HEK293 (cell line): ENCODE measurements at regions of chr12 and their contacts with region 1.

Region 1: GRCh38 chr12:52980693-52981423 is 25.4 kb upstream of the EIF4B start:
- H3K4me3 ChIP-seq: no peak overlapping the region
- H3K27ac ChIP-seq: no peak overlapping the region
- H3K4me1 ChIP-seq: no peaks in the 10 kb centered on the region
- CTCF ChIP-seq: peak; percentile 99

Region 2: GRCh38 chr12:52139552-52140062 is 841.3 kb before region 1 on chr12:
- CTCF ChIA-PET with region 1: interaction called, 13 read pairs
- POLR2A ChIA-PET with region 1: no interaction called
- H3K4me3 ChIP-seq: no peak overlapping the region
- H3K27ac ChIP-seq: no peak overlapping the region
- H3K4me1 ChIP-seq: no peaks in the 10 kb centered on the region; the same call in 1 of the 2 replicates
- CTCF ChIP-seq: peak; percentile 59

Region 3: GRCh38 chr12:52372216-52373154 is 608.4 kb before region 1 on chr12:
- CTCF ChIA-PET with region 1: interaction called, 22 read pairs
- POLR2A ChIA-PET with region 1: no interaction called
- H3K4me3 ChIP-seq: no peak overlapping the region
- H3K27ac ChIP-seq: no peak overlapping the region
- H3K4me1 ChIP-seq: no peaks in the 10 kb centered on the region
- CTCF ChIP-seq: peak; percentile 77

Region 4: DNA sequence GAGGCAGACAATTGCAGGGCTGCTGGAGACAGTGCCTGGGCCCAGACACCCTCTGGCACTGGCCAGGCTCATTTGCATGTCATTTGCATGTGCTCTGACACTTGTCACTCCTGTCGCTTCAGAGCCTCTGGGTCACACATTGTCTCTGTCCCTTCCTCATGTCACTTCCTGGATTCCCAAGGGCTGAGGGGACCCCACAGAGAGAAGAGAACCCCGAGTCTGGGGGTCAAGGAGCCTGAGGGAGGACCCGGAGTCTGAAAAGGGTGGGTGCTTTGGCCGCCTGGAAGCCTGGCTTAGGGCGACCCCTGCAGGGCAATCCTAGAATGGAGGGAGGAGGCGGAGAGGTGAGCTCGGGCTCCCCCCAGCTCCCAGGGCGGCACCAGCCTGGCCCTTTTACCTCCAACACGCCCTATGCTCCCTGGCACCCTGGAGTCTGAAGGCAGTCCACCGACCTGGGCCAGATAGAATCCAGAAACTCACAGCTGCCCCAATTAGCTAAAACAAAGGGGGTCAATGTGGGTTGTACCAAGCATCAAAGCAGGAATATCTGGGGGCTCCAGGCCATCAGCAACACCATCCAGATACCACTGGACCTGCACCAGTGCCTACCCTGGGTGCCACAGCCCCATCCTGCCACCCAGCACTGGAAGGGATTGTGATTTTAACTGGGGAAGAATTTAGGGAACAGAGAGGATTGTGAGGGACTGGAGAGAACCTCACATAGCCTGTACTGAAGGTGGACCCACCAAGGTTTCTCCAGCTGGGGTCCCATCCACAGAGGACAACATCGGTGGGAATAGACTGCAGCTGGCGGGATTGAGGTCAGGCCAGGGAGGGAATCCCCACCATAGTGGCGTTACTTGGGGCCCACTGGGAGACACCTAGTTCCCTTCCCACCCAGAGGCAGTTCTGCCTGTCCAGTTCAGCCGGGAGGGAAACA is 110.2 kb before region 1 on chr12:
- CTCF ChIA-PET with region 1: interaction called, 28 read pairs
- POLR2A ChIA-PET with region 1: interaction called, 3 read pairs
- H3K4me3 ChIP-seq: no peak overlapping the region
- H3K27ac ChIP-seq: no peak overlapping the region
- H3K4me1 ChIP-seq: peaks cover 13% of the 10 kb centered on the region; the same call in 1 of the 2 replicates
- CTCF ChIP-seq: peak; percentile 84

Region 5: GRCh38 chr12:52895061-52895887 is 85.6 kb before region 1 on chr12:
- CTCF ChIA-PET with region 1: interaction called, 316 read pairs
- POLR2A ChIA-PET with region 1: interaction called, 14 read pairs
- H3K4me3 ChIP-seq: no peak overlapping the region
- H3K27ac ChIP-seq: peak overlapping the region; percentile 69
- H3K4me1 ChIP-seq: peaks cover 15% of the 10 kb centered on the region
- CTCF ChIP-seq: no peak

Region 6: GRCh38 chr12:52924764-52925716 is 55.8 kb before region 1 on chr12:
- CTCF ChIA-PET with region 1: interaction called, 11 read pairs
- POLR2A ChIA-PET with region 1: interaction called, 3 read pairs
- H3K4me3 ChIP-seq: no peak overlapping the region
- H3K27ac ChIP-seq: peak overlapping the region; percentile 28
- H3K4me1 ChIP-seq: peaks cover 17% of the 10 kb centered on the region
- CTCF ChIP-seq: no peak

Region 7: DNA sequence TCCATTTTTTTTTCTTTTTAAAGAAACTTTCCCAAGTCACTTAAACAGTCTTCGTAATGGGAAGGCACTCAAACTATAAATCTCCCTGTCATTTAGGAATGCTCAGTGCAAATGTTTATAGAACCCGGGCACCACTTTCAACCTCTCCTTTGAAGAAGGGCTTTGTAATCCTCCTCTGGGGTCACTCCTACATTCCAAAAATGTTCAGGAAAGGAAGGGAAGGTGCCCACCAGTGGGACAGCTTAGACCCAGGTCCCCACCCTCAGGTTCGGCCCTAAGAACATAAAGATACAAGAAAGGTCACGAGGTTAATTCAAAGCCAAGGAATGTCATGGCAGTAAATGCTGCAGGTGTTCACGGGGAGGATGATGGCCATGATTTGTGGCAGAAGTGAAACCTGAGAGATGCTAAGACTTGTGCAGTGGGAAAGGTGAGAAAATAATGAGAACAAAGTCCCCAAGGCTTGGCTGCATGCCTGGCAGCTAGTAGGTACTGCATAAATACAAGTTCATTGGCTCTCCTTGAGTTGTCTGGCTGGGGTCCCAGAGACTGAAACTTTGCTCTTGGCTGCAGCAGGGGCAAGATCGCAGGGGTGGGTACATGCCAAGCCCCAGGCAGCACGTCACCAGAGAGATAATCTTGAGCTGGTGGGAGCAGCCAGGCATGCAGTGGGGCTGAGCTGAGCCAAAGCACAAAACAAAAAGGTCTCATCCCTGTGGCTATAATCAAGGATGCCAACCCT is 10.9 kb before region 1 on chr12:
- CTCF ChIA-PET with region 1: interaction called, 13 read pairs
- POLR2A ChIA-PET with region 1: no interaction called
- H3K4me3 ChIP-seq: no peak overlapping the region
- H3K27ac ChIP-seq: no peak overlapping the region
- H3K4me1 ChIP-seq: peaks cover 4% of the 10 kb centered on the region
- CTCF ChIP-seq: no peak

Region 8: GRCh38 chr12:53145383-53146260 is 164.8 kb after region 1 on chr12:
- CTCF ChIA-PET with region 1: no interaction called
- POLR2A ChIA-PET with region 1: no interaction called
- H3K4me3 ChIP-seq: no peak overlapping the region
- H3K27ac ChIP-seq: no peak overlapping the region
- H3K4me1 ChIP-seq: no peaks in the 10 kb centered on the region
- CTCF ChIP-seq: no peak